GM12878 (cell line): ENCODE measurements at regions of chr5 and their contacts with region 1.

Region 1: GRCh38 chr5:91225848-91226686 is 157.1 kb downstream of the ARRDC3 start:
- DNase-seq: peak; percentile 8
- ATAC-seq: peak; percentile 84
- H3K4me3 ChIP-seq: no peak overlapping the region
- H3K27ac ChIP-seq: no peak overlapping the region
- H3K4me1 ChIP-seq: no peaks in the 10 kb centered on the region
- H3K27me3 ChIP-seq: no peaks in the 10 kb centered on the region; a peak in 1 of 4 replicates
- CTCF ChIP-seq: peak; percentile 53 to 71 (median 58); a peak in 5 of 6 replicates
- EP300 ChIP-seq: no peak
- POLR2A ChIP-seq: no peak
- RAD21 ChIP-seq: peak; percentile 84

Region 2: DNA sequence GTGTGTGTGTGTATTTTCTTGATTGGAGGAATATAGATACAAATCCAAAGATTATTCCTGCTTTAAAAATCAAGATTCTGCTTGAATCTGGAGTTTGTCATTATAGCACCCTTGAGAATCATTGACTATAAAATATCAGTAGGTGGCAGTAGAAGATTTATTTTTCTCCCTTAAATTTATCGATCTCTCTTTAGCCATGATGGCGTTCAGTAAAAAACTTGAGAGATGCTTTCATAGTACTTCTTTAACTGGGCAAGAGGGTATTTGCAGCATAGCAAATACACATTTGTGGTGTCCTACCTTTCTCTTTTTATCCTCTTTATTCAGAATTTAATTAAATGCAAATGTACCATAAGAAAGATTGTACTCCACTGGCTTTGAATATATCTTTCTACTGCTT is 359.7 kb before region 1 on chr5:
- CTCF ChIA-PET with region 1: interaction called, 4 read pairs
- POLR2A ChIA-PET with region 1: no interaction called
- RAD21 ChIA-PET with region 1: no interaction called
- SMC1A ChIA-PET with region 1: interaction called, 3 read pairs
- in situ Hi-C with region 1: no loop called
- intact Hi-C with region 1: loop called (anchors 5 kb)
- DNase-seq: no peak
- ATAC-seq: peak; percentile 67
- H3K4me3 ChIP-seq: no peak overlapping the region
- H3K27ac ChIP-seq: no peak overlapping the region
- H3K4me1 ChIP-seq: no peaks in the 10 kb centered on the region
- H3K27me3 ChIP-seq: no peaks in the 10 kb centered on the region
- CTCF ChIP-seq: peak in 2 of 3 experiments; percentile 23 to 44; a peak in 3 of 6 replicates
- EP300 ChIP-seq: no peak
- POLR2A ChIP-seq: no peak
- RAD21 ChIP-seq: peak; percentile 55; the same call in 1 of the 2 replicates